ENCODE measurements at regions of chr11 and their contacts with region 1.

Region 1: DNA sequence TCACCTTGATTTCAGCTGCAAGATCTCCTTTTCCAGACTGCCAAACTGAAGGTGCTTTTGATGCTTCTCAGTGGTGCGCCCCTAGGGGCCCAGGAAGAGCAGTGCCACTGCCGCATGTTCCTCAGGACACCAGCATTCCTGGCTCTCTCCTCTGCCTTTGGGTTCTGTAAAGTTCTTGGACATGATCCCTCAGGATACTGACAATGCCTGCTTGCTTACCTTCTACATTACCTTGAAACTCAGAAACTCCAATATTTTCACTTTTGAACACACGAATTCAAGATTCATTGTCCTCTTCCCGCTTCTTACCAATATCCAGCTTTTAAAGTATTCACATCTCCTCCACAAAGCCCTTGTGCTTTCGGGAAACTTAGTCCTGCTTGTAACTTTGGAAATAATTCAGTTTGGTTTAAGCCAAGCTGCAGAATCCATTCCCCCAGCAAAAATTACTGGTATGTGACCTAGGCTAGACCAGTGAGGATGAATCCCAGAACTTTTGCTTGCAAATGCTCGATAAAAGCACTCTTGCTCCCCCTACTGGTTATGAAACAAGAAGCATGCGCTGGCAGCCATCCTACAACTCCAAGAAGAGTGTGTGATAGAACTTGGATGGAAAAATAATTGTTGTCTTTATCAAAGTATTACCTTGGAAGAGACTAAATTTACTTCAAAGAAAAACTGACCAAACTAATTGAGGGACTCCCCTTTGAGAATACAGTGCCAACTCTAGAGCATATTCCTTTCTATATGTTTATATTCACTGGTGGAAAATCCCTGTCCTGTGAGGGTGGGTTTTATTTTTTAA is 16.5 kb upstream of the OR5B21 start:
- DNase-seq: peak; percentile 61
- ATAC-seq: peak; percentile 59
- H3K4me3 Mint-ChIP-seq: peak overlapping the region; percentile 72
- H3K27ac Mint-ChIP-seq: peak overlapping the region; percentile 96
- H3K4me1 Mint-ChIP-seq: peaks cover 62% of the 10 kb centered on the region
- H3K27me3 Mint-ChIP-seq: no peaks in the 10 kb centered on the region
- CTCF ChIP-seq: peak; percentile 90

Region 2: DNA sequence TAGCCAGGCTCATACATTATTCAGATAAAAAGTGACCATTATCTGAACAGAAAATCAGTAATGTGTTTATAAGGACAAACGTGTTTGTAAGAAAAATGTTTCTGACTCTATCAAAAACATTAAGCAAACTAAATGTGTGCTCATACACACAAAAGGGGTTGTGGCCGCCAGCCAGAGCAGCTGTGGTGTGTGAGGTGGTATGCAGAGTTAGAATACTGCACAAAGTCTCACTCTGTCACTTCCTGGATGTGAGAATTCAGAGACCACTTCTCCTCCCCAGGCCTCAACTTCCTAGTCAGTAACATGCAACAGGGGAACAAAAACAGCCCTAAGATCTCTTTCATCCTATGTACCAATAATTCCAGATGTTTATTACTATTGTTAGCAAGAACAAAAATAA is 26.0 kb before region 1 on chr11:
- CTCF ChIA-PET with region 1: interaction called, 14 read pairs
- POLR2A ChIA-PET with region 1: no interaction called
- intact Hi-C with region 1: no loop called
- DNase-seq: peak; percentile 46
- ATAC-seq: peak; percentile 70
- H3K4me3 Mint-ChIP-seq: no peak overlapping the region
- H3K27ac Mint-ChIP-seq: peak overlapping the region; percentile 82
- H3K4me1 Mint-ChIP-seq: peaks cover 44% of the 10 kb centered on the region
- H3K27me3 Mint-ChIP-seq: no peaks in the 10 kb centered on the region
- CTCF ChIP-seq: no peak

Region 3: GRCh38 chr11:58505849-58506248 is 18.6 kb before region 1 on chr11:
- CTCF ChIA-PET with region 1: interaction called, 28 read pairs
- POLR2A ChIA-PET with region 1: interaction called, 4 read pairs
- intact Hi-C with region 1: no loop called
- DNase-seq: peak; percentile 48
- ATAC-seq: peak; percentile 88
- H3K4me3 Mint-ChIP-seq: peak overlapping the region; percentile 22
- H3K27ac Mint-ChIP-seq: peak overlapping the region; percentile 72
- H3K4me1 Mint-ChIP-seq: peaks cover 21% of the 10 kb centered on the region
- H3K27me3 Mint-ChIP-seq: no peaks in the 10 kb centered on the region
- CTCF ChIP-seq: no peak

Region 4: GRCh38 chr11:58513747-58514367 is 10.6 kb before region 1 on chr11:
- CTCF ChIA-PET with region 1: interaction called, 28 read pairs
- POLR2A ChIA-PET with region 1: interaction called, 4 read pairs
- intact Hi-C with region 1: no loop called
- DNase-seq: peak; percentile 35
- ATAC-seq: peak; percentile 58
- H3K4me3 Mint-ChIP-seq: no peak overlapping the region
- H3K27ac Mint-ChIP-seq: no peak overlapping the region
- H3K4me1 Mint-ChIP-seq: no peaks in the 10 kb centered on the region
- H3K27me3 Mint-ChIP-seq: no peaks in the 10 kb centered on the region
- CTCF ChIP-seq: peak; percentile 47

Region 5: DNA sequence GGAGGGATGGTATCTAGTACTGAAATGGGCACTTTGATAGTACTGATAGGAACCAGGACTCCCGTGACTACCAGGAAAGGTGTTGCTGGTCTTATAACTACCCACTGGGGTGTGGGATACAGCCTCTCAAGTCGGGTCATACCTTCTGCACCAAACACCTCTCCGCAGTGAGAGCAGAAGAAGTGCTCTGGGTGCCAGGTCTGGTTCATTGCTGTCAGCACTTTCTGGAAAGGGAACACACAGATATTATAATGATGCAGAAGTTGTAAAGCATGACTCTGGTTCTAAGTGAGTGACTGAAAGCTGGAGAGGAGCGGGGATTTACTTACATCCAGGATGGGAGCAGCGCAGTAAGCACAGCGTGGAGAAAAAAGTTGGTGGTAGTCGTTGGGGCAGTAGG is 25.2 kb after region 1 on chr11:
- CTCF ChIA-PET with region 1: interaction called, 10 read pairs
- POLR2A ChIA-PET with region 1: interaction called, 3 read pairs
- intact Hi-C with region 1: no loop called
- DNase-seq: no peak
- ATAC-seq: no peak
- H3K4me3 Mint-ChIP-seq: no peak overlapping the region
- H3K27ac Mint-ChIP-seq: no peak overlapping the region
- H3K4me1 Mint-ChIP-seq: peaks cover 14% of the 10 kb centered on the region
- H3K27me3 Mint-ChIP-seq: no peaks in the 10 kb centered on the region
- CTCF ChIP-seq: no peak

Region 6: DNA sequence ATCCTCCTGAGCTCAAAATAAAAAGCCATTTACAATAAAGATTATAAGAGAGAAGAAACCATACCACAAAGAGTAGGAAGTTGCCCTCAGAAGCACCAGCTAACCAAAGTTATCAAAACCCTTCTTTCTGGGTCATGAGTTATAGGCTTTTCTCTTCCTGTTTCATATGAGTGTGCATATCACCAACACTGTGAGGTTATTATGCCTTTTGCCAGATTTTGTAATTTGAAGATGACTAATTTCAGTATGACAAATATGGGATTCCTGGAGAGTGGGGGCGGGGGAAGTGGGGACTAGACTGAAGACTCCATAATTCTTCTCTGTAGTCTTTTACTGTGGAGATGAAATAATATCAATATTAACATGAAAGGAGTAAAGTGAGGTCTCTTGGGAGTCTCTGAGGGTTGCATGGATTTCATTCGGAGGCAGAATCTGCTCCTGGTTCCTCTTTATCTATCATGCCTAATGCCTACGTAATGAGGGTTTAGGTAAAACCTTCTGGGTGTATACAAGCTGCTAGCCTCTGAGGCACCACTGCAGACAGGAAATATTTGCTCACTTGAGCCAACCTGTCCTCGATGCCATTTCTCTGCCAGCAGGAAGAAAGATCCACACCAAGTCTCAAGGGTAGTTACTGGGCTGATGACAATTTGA is 49.1 kb after region 1 on chr11:
- CTCF ChIA-PET with region 1: interaction called, 35 read pairs
- POLR2A ChIA-PET with region 1: interaction called, 11 read pairs
- intact Hi-C with region 1: loop called (anchors 2 kb)
- DNase-seq: peak; percentile 85
- ATAC-seq: peak; percentile 29
- H3K4me3 Mint-ChIP-seq: peak overlapping the region; percentile 93
- H3K27ac Mint-ChIP-seq: peak overlapping the region; percentile 98
- H3K4me1 Mint-ChIP-seq: peaks cover 37% of the 10 kb centered on the region
- H3K27me3 Mint-ChIP-seq: no peaks in the 10 kb centered on the region
- CTCF ChIP-seq: no peak